ENCODE measurements at regions of chr6 and their contacts with region 1.

Region 1: DNA sequence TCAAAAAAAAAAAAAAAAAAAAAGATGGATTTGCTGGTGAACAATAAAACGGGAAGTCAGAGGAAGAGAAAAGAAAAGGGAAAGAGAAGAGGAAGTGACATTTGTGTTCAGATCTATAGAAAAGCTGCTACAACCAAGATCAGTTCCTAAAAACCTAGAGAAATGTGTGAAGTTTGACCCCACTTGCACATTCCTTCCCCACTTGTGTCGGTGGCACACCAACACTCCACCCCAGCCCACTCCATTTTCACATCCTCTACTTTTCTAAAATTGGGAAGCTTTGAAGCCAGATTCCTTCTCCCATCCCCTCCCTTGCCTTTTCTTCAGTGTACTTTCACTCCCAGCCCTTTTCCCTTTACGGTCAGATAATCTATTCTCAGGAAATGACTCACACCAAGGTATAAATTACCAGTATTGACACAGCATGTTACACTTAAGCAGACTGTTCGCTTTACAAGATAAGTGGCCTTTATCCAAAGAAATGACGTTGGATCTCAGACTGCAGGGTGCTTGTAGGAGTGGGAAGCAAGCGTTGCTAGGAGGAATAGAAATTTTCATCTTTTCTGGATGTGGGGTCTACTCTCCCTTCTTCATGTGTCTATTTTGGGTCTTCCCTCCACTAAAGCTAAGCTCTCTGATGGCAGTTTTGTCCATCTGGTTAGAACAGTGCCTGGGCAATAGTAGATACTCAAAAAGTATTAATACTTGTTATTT is 92.5 kb upstream of the ADGRF1 start:
- DNase-seq: no peak
- H3K4me3 ChIP-seq: no peak overlapping the region
- H3K27ac ChIP-seq: peak overlapping the region; percentile 74 to 81 (median 76)
- H3K4me1 ChIP-seq: peaks cover 17 to 53% (median 31%) of the 10 kb centered on the region in 4 donors
- H3K27me3 ChIP-seq: no peaks in the 10 kb centered on the region
- CTCF ChIP-seq: no peak
- EP300 ChIP-seq: no peak
- POLR2A ChIP-seq: peak; percentile 23

Region 2: DNA sequence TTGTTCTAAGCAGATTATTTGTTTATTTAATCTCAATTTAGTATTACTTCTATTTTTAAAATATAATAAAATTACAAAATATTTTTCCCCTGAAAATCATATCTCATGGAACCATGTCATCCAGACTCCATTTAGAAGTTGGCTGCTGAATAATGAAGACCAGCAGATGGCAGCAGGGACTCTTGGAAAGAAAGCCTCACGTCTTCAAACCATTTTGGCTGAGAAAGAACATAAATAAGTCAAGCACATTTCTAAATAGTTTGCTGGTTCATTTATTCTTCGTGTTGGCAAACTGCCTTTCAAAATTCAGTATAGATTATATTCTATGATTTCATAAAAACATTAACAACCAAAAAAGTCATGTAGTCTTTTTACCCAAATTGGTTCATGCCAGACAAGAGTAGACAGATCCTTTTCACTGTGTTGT is 715.0 kb before region 1 on chr6:
- in situ Hi-C with region 1: no loop called
- intact Hi-C with region 1: no loop called
- DNase-seq: peak; percentile 60
- H3K4me3 ChIP-seq: no peak overlapping the region
- H3K27ac ChIP-seq: no peak overlapping the region
- H3K4me1 ChIP-seq: no peaks in the 10 kb centered on the region
- H3K27me3 ChIP-seq: no peaks in the 10 kb centered on the region
- CTCF ChIP-seq: peak; percentile 71 to 86 (median 76)
- EP300 ChIP-seq: no peak
- POLR2A ChIP-seq: no peak

Region 3: DNA sequence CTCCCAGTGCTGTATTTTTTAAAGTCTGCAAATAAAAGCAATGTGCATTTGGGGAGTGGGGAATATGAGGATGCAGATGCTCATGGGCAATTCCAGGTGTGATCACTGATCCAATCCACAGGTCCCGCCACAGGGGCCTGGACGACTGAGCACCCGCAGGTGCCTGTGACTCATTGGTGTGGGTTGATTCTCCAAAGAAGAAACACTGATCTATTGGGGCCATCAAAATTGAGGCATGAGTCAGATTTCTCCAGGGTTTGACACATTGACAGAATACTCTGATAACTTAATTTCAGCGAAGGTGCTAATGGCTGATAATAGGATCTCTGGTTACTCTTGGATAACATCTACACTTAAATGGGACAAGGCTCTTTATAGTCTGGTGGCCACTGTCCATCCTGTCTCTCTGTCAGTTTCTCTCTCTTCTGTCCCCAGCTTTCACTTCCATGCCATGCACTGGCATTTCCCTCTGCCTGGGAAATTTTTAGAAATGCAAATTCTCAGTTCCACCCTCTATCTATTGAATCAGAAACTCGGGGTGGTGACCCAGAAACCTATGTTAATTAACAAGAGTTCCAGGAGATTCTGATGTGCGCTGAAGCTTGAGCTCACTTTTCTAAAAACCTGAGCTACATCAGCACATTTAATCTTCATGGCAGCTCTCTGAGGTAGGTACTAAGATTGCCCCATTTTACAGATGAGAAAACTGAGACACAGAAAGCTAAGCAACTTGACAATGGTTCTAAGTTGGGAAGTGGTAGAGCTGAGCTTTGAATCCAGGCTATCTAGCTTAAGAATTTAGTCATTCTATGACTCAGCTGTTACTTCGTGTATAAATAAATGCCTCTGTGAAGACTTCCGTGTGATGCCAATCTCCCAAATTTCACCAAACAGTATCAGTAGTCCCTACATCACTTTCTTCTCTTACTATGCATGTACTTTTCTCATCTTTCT is 633.2 kb before region 1 on chr6:
- in situ Hi-C with region 1: no loop called
- intact Hi-C with region 1: no loop called
- DNase-seq: no peak
- H3K4me3 ChIP-seq: no peak overlapping the region
- H3K27ac ChIP-seq: peak overlapping the region in 3 of 4 donors; percentile 1 to 49 (median 24)
- H3K4me1 ChIP-seq: peaks cover 0 to 18% (median 2%) of the 10 kb centered on the region in 4 donors
- H3K27me3 ChIP-seq: no peaks in the 10 kb centered on the region
- CTCF ChIP-seq: no peak
- EP300 ChIP-seq: no peak
- POLR2A ChIP-seq: no peak

Region 4: DNA sequence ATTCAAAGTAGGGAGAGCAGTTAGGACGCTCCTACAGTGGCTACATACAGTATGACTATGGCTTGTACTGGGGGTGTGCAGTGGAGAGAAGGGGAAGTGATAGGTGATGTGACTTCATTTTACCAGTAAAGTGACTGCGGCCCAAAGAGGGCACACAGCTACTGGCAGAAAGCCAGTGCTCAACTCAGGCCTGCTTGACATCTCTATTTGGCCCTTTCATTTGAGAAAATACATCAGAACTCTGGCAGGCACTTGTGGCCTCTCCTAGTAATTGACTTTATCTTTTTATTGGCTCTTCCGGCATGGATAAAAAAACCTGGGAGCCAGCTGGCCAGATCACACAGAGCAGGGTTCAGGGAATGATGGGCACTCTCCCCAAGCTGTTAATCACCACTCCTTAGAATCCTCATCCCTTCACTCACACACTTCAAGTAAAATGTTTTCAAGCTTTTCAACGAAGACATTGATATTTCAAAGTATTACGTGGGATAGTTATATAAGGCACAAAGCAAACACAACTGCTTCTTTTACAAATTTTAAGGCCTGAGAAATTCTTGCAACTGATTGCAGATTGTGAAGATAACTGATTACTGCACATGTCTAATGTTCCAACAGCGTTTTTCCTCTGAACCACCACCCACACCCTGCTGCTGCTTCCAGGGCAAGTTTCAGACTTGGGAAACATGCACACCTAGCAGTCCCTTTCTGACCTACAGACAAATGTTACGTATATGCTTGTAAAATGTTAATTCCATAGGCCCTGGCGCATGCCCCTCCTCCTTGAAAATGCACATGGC is 101.5 kb after region 1 on chr6:
- in situ Hi-C with region 1: no loop called
- intact Hi-C with region 1: loop called (anchors 10 kb)
- DNase-seq: peak; percentile 50
- H3K4me3 ChIP-seq: no peak overlapping the region
- H3K27ac ChIP-seq: peak overlapping the region; percentile 59 to 74 (median 68)
- H3K4me1 ChIP-seq: peaks cover 7 to 38% (median 25%) of the 10 kb centered on the region in 4 donors
- H3K27me3 ChIP-seq: no peaks in the 10 kb centered on the region
- CTCF ChIP-seq: no peak
- EP300 ChIP-seq: no peak
- POLR2A ChIP-seq: no peak

Region 5: DNA sequence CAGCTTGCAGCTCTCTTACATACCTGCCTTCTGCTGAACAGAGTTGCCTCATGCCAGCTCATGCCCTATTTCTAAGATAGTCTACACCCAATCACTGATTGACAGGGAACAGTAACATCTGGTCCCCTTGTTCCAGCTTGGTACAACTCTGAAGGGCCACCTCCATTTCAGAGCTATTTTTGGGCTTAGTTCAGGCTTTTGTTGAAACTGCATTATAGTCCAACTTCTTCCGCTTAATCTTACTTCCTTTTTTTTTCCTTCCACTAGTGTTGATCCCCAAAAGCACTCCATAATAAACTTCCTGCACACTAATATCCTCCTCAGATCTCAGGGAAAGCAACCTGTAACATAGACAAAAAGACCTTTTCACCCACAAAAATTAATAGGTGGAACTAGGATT is 240.8 kb after region 1 on chr6:
- in situ Hi-C with region 1: no loop called
- intact Hi-C with region 1: no loop called
- DNase-seq: no peak
- H3K4me3 ChIP-seq: no peak overlapping the region
- H3K27ac ChIP-seq: no peak overlapping the region
- H3K4me1 ChIP-seq: no peaks in the 10 kb centered on the region
- H3K27me3 ChIP-seq: no peaks in the 10 kb centered on the region
- CTCF ChIP-seq: no peak
- EP300 ChIP-seq: no peak
- POLR2A ChIP-seq: no peak

Measured in transverse colon (tissue), 4 donors.